SK-N-SH (cell line): ENCODE measurements at regions of chr7 and their contacts with region 1.

Region 1: DNA sequence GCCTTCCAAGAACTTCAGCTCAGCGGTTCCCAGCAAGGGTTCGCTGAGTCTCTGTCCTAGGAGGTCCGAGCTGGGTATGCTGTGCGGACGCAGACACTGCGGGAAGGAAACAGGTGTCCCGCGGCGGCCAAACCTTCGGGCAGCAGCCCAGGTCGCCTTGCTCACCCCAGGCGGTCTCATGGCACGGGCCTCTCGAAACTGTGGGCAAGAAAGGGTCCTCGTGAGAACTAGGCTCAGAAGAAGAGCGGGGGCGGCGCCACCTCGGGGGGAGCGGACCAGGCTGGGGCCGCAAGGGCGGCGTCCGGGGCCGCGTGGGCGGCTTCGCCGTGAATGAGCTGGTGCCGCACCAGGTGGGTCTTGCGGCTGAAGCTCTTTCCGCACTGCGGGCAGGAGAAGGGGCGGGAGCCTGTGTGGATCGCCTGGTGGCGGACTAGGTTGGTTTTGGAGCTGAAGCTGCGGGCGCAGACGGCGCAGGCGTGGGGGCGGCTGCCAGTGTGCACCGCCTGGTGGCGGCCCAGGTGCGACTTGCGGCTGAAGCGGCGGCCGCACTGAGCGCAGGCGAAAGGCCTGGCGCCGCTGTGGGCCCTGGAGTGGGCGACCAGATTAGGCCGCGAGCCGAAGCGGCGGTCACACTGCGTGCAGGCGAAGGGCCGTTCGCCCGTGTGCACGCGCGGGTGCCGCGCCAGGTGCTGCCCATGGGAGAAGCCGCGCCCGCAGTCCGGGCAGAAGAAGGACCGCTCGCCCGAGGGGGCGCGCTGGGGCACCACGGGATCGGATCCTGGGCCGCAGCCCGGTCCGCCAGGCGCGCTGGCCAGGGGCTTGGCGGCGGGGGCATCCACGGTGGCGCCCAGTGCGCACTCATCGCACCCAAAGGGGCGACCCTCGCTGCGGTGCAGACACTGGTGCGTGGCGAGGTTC is 8.6 kb downstream of the ZNF467 start:
- DNase-seq: peak; percentile 79
- H3K4me3 ChIP-seq: peak overlapping the region in 1 of 2 experiments; percentile 2; a peak in 1 of 4 replicates
- H3K27ac ChIP-seq: no peak overlapping the region
- H3K4me1 ChIP-seq: peaks cover 0 to 11% of the 10 kb centered on the region in 2 experiments; a peak in 1 of 4 replicates
- H3K27me3 ChIP-seq: peaks cover 91% of the 10 kb centered on the region
- CTCF ChIP-seq: peak; percentile 18
- EP300 ChIP-seq: no peak
- RAD21 ChIP-seq: no peak; the same call in 1 of the 2 replicates

Region 2: DNA sequence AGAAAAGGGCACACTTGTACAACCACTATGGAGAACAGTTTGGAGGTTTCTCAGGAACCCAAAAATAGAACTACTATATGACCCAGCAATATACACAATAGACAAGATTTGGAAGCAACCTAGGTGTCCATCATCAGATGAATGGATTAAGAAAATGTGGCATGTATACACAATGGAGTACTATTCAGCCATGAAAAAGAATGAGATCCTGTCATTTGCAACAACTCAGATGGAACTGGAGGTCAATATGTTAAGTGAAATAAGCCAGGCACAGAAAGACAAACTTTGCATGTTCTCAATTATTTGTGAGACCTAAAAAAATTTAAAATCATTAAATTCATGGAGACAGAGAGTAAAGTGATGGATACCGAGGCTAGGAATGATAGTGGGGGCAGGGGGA is 110.2 kb before region 1 on chr7:
- CTCF ChIA-PET with region 1: no interaction called
- POLR2A ChIA-PET with region 1: no interaction called
- DNase-seq: no peak
- H3K4me3 ChIP-seq: no peak overlapping the region
- H3K27ac ChIP-seq: no peak overlapping the region
- H3K4me1 ChIP-seq: peaks cover 0 to 2% of the 10 kb centered on the region in 2 experiments; a peak in 1 of 4 replicates
- H3K27me3 ChIP-seq: no peaks in the 10 kb centered on the region
- CTCF ChIP-seq: no peak
- EP300 ChIP-seq: no peak
- RAD21 ChIP-seq: no peak

Region 3: DNA sequence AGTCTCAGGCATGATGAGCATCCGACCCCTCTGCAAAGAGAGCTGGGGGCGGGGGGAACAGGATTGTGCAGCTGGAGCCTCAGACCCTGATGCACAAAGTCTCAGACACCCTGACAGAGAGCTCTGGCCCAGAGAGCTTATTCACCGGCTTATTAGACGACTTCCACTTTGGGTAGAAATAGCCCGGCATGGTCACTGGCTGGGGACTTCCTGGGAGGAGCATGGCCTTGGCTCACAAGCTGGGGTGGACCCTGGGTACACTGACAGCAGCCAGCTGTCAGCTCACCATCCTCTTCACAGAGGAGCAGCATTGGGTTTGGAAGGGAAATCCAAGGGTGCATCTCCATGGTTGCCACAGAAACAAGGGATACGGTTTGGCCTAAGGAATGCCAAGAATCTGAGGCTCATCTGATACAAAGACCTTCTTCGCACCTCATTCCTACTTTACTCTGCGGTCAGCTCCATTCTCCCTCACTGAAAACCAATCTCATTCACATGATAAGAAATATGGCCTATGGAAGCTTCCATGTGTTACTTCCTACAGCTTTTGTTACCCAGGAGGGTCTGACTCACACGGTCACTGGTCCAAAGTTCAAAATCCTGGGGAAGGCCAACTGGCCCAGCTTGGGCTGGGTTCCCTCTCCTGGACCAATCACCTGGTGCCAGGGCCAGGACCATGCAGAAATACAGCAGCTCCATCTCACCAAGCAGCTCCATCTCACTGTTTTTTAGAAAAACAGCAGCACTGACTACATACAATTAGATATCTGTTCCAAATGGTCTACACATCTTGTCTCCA is 16.5 kb before region 1 on chr7:
- CTCF ChIA-PET with region 1: interaction called, 25 read pairs
- POLR2A ChIA-PET with region 1: no interaction called
- DNase-seq: no peak
- H3K4me3 ChIP-seq: no peak overlapping the region
- H3K27ac ChIP-seq: no peak overlapping the region
- H3K4me1 ChIP-seq: no peaks in the 10 kb centered on the region
- H3K27me3 ChIP-seq: peaks cover 32% of the 10 kb centered on the region
- CTCF ChIP-seq: no peak
- EP300 ChIP-seq: no peak
- RAD21 ChIP-seq: no peak